Esophagus muscularis mucosa (tissue), 4 donors: ENCODE measurements at regions of chrX and their contacts with region 1.

Region 1: GRCh38 chrX:120499301-120500072 is 30.4 kb upstream of the LAMP2 start:
- DNase-seq: no peak
- H3K4me3 ChIP-seq: no peak overlapping the region
- H3K27ac ChIP-seq: no peak overlapping the region
- H3K4me1 ChIP-seq: no peaks in the 10 kb centered on the region
- H3K27me3 ChIP-seq: no peaks in the 10 kb centered on the region
- CTCF ChIP-seq: no peak
- EP300 ChIP-seq: no peak
- POLR2A ChIP-seq: no peak

Region 2: GRCh38 chrX:120365320-120365719 is 134.2 kb before region 1 on chrX:
- intact Hi-C with region 1: no loop called
- DNase-seq: no peak
- H3K4me3 ChIP-seq: no peak overlapping the region
- H3K27ac ChIP-seq: no peak overlapping the region
- H3K4me1 ChIP-seq: no peaks in the 10 kb centered on the region
- H3K27me3 ChIP-seq: no peaks in the 10 kb centered on the region
- CTCF ChIP-seq: peak in 2 of 3 experiments; percentile 7 to 34
- EP300 ChIP-seq: no peak
- POLR2A ChIP-seq: no peak

Region 3: DNA sequence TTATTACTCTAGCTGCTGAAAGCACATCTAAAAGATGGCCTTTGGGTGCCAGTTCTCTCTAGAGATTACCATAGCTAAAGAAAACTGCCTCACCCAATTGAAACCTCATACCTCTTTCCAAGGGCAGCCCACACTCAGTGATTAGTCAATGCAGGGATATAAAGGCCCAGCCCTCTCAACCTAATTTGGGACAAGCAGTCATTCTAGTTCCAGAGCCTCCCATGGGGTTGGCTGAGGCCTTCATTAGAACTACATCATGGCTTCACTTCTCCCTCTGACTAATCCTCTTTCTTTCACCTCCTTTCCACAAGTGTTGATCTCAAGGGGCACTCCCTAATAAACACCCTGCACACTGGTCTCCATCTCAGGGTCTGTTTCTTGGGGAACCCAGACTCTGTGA is 168.9 kb after region 1 on chrX:
- intact Hi-C with region 1: loop called (anchors 5 kb)
- DNase-seq: no peak
- H3K4me3 ChIP-seq: no peak overlapping the region
- H3K27ac ChIP-seq: no peak overlapping the region
- H3K4me1 ChIP-seq: peaks cover 0 to 4% (median 0%) of the 10 kb centered on the region in 4 donors
- H3K27me3 ChIP-seq: no peaks in the 10 kb centered on the region
- CTCF ChIP-seq: no peak
- EP300 ChIP-seq: no peak
- POLR2A ChIP-seq: no peak

Region 4: GRCh38 chrX:120769576-120770341 is 270.3 kb after region 1 on chrX:
- intact Hi-C with region 1: loop called (anchors 10 kb)
- DNase-seq: no peak
- H3K4me3 ChIP-seq: no peak overlapping the region
- H3K27ac ChIP-seq: peak overlapping the region in 1 of 4 donors; percentile 25
- H3K4me1 ChIP-seq: no peaks in the 10 kb centered on the region
- H3K27me3 ChIP-seq: no peaks in the 10 kb centered on the region
- CTCF ChIP-seq: peak in 1 of 3 experiments; percentile 9
- EP300 ChIP-seq: no peak
- POLR2A ChIP-seq: no peak